Left colon (tissue), 2 donors: ENCODE measurements at regions of chr6 and their contacts with region 1.

Region 1: DNA sequence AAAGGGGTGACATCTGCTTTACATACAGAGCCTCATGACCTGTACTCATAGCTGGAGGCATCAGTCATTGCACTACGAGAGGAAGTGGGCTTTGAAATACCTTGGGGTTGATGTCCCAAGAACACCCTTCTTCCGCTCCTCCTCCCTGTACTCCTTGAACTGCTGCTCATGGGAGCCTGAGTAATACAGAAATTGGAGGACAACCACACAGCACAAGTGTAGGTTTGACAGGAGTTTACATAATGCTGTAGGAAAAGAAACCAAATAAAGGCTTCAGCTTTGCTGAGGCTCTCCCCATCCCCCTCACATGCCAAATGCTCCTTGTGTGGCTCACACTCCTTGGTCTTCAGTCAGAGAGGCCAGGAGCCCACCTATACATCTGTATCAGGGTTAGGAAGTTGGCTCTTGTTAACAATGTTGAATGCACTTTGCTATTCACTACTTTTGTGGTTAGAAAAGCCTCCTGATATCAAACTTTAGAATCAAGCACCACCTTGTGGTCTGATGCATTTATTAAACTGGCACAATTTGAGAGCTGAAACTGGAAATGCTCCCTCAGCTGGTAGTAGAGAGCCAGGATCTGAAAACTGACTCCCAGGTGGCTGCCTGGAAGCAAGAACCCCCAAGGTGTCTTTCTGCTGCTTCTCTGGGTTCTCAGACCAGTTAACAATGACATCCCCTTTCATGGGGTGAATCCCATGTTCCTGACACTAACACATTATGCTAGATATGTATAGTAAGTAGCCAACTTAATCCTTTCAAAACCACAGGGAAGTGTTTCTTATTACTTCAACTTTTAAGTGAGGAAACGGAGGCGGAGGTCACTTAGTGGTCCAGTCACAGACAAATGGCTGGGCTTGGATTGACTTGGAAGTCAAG is 56.2 kb upstream of the EDN1 start:
- DNase-seq: peak; percentile 28 to 35
- ATAC-seq: peak; percentile 86

Region 2: GRCh38 chr6:11585426-11586016 is 648.4 kb before region 1 on chr6:
- intact Hi-C with region 1: loop called in 1 of 2 experiments (anchors 5 kb)
- DNase-seq: no peak
- ATAC-seq: peak; percentile 38

Region 3: GRCh38 chr6:11653028-11653583 is 580.8 kb before region 1 on chr6:
- intact Hi-C with region 1: loop called in 1 of 2 experiments (anchors 5 kb)
- DNase-seq: no peak
- ATAC-seq: no peak

Region 4: DNA sequence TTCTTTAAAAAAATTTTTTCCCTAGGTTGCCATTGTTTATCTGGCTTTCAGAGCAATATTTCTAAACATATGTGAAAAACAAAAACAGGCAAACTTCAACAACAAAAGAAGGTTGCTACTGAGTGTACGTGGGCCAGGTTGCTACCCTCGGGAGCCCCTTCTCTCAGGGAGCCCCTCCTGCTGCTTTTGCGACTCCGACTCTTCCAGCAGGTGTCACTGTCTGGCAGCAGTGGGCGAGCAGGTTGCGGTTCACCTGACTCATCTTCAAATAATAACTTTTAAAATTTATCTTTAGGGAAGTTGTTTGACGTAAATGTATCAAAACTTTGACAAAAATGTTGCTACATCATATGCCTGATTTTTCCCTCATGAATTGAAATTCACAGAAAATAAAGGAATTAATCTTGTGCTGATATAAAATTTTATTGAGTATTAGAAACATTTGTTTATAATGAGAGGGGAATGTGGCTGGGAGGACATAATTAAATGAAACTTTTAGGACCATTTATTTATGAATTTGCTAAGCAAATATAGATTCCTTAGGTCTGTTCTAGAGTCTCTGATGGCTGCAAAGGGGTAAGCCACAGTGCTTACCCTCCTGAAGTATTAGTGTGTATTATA is 83.0 kb before region 1 on chr6:
- intact Hi-C with region 1: loop called in 1 of 2 experiments (anchors 5 kb)
- DNase-seq: peak; percentile 38 to 57
- ATAC-seq: peak; percentile 73

Region 5: GRCh38 chr6:12363651-12364381 is 129.9 kb after region 1 on chr6:
- intact Hi-C with region 1: no loop called
- DNase-seq: peak; percentile 63 to 79
- ATAC-seq: peak; percentile 82